A673 (cell line): ENCODE measurements at regions of chr2 and their contacts with region 1.

Region 1: GRCh38 chr2:28594289-28595108 is 98.6 kb downstream of the PLB1 start:
- DNase-seq: peak; percentile 76
- H3K4me3 ChIP-seq: no peak overlapping the region
- H3K27ac ChIP-seq: no peak overlapping the region
- H3K4me1 ChIP-seq: peaks cover 21% of the 10 kb centered on the region
- H3K27me3 ChIP-seq: no peaks in the 10 kb centered on the region
- CTCF ChIP-seq: peak; percentile 89

Region 2: DNA sequence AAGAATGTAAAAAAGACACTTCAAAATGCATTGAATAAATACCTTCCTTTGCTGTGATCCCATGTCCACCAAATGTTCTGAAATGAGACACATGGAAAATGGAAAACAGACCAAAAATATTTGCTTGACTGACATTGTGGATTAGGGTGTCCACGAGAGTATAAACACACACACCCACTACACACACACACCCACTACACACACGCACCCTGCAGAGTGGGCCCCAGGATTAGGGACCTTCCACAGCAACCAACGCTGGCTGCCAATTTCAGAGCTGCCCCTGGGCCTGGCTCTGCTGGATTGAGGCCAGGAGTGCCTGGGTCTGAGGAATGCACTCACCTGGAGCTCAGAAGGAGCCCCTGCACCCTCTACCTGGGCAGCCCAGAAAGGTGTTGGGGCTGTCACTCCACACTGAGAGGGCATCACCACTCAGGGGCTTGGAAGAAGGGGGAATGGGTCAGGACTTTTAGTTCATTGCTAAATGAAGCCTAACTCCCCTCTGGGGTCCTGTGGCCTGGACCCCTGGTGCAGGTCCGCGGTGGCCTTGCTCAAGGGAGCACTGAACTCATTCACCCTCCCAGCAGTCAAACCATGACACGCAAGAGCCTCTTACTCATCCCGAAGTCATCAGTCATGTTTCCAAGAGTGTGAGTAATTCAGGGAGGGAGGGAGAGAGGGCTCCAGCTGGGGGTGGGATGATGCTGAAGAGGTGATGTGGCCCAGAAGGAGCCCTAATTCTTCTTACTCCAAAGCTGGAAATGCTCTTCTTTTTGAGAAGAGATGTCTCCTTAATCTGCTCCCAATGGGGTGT is 148.8 kb before region 1 on chr2:
- CTCF ChIA-PET with region 1: no interaction called
- POLR2A ChIA-PET with region 1: no interaction called
- intact Hi-C with region 1: no loop called
- DNase-seq: peak; percentile 33
- H3K4me3 ChIP-seq: no peak overlapping the region
- H3K27ac ChIP-seq: no peak overlapping the region
- H3K4me1 ChIP-seq: no peaks in the 10 kb centered on the region
- H3K27me3 ChIP-seq: no peaks in the 10 kb centered on the region
- CTCF ChIP-seq: no peak

Region 3: DNA sequence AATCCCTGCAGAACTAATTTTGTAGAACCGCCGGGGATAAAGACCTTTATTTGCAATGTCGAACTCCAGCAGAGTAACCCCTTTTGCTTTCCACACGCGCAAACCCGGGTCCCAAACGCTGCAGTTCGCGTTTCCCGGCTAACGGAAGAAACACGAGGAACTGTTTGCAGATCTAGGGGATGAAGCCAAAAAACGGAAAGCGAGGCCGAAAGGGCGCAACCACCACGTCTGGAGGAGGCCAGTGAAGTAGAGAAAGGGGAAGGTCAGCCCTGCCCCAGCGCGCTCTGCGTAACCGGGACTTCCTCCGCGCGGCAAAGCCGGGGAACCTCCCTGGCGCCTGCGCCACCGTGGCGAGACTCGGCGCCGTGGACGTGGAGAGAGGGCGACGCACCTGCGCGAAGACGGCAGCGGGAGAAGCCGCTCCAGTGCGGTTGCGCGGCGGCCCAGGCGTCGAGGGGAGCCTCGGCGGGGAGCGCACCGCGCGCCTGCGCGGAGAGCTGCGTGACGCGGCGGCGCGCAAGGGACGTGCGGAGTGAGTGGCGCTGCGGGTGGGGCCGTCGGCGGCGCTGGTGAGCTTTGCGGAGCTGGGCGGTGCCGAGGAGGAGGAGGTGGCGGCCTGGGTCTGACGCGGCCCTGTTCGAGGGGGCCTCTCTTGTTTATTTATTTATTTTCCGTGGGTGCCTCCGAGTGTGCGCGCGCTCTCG is 156.9 kb after region 1 on chr2 and contains the start of gene PPP1CB:
- CTCF ChIA-PET with region 1: interaction called, 12 read pairs
- POLR2A ChIA-PET with region 1: interaction called, 10 read pairs
- intact Hi-C with region 1: loop called (anchors 2 kb)
- DNase-seq: peak; percentile 97
- H3K4me3 ChIP-seq: peak within 1 kb of the TSS; percentile 91
- H3K27ac ChIP-seq: peak within 1 kb of the TSS; percentile 98
- H3K4me1 ChIP-seq: peaks cover 26% of the 10 kb centered on the region
- H3K27me3 ChIP-seq: no peaks in the 10 kb centered on the region
- CTCF ChIP-seq: 0 out of 2 replicates have a peak, but pooled peaks have one; percentile 21
- total RNA-seq, gene PPP1CB: 167 and 181 TPM in 2 replicates

Region 4: GRCh38 chr2:28764909-28765711 is 170.6 kb after region 1 on chr2:
- CTCF ChIA-PET with region 1: no interaction called
- POLR2A ChIA-PET with region 1: no interaction called
- intact Hi-C with region 1: no loop called
- DNase-seq: peak; percentile 21
- H3K4me3 ChIP-seq: no peak overlapping the region
- H3K27ac ChIP-seq: no peak overlapping the region
- H3K4me1 ChIP-seq: peaks cover 12% of the 10 kb centered on the region
- H3K27me3 ChIP-seq: no peaks in the 10 kb centered on the region
- CTCF ChIP-seq: no peak